Activated B cell treated with CpG ODN at 0.5 μM for 24 hours (primary cell): ENCODE measurements at regions of chr11 and their contacts with region 1.

Region 1: DNA sequence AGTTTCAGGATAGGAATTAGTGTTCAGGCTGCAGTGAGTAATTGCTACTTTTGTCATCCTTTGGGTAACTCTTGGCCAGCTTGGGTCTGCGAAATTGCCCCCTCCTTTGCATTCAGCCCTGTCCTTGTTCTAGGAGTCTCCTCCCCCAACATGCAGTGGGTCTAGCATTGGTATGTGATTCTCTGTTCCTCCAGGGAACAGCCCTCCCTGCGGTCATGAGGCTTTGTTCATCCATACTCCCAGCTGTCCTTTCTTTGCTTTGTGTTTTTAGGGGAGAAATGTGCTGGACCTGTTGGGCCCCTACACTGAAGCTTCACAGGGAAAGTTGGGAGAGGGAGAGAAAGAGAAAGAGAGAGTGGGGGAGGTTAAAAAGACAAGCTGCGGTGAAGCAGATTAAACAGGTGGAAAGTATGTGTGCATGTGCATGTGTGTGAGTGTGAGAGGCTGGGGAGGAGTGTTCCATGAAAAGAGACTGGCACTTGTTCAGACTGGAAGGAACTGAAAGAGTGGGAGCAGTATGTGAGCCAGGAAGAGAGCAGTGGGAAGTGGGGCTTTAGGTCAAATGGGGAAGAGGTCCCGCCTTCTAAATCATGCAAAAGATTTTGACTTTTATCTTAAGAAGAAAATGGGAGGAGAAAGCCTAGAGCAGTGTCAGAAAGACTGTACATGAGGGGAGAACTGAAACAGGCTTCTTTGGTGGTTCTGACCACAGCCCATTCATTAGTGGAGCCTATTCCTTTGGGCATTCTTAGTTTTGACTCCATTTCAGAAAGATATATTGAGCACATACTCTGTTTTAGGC is 17.9 kb upstream of the SESN3 start:
- DNase-seq: no peak
- ATAC-seq: peak; percentile 86
- H3K4me3 Mint-ChIP-seq: peak overlapping the region; percentile 73
- H3K27ac Mint-ChIP-seq: peak overlapping the region; percentile 95
- H3K4me1 Mint-ChIP-seq: peaks cover 59% of the 10 kb centered on the region
- H3K27me3 Mint-ChIP-seq: no peaks in the 10 kb centered on the region
- CTCF ChIP-seq: no peak

Region 2: GRCh38 chr11:95266751-95267374 is 18.0 kb after region 1 on chr11:
- CTCF ChIA-PET with region 1: no interaction called
- POLR2A ChIA-PET with region 1: interaction called, 11 read pairs
- intact Hi-C with region 1: no loop called
- DNase-seq: no peak
- ATAC-seq: no peak
- H3K4me3 Mint-ChIP-seq: no peak overlapping the region
- H3K27ac Mint-ChIP-seq: no peak overlapping the region
- H3K4me1 Mint-ChIP-seq: peaks cover 25% of the 10 kb centered on the region
- H3K27me3 Mint-ChIP-seq: no peaks in the 10 kb centered on the region
- CTCF ChIP-seq: no peak